ENCODE measurements at regions of chr3 and their contacts with region 1.

Region 1: GRCh38 chr3:57555738-57556458 is at the start of gene PDE12:
- DNase-seq: peak; percentile 82 to 85
- ATAC-seq: peak; percentile 96 to 98
- H3K4me3 ChIP-seq: peak within 1 kb of the TSS; percentile 75 to 94 (median 83)
- H3K27ac ChIP-seq: peak within 1 kb of the TSS; percentile 90 to 98 (median 94)
- H3K4me1 ChIP-seq: peaks cover 20 to 28% of the 10 kb centered on the region in 2 donors
- H3K27me3 ChIP-seq: no peaks in the 10 kb centered on the region
- CTCF ChIP-seq: no peak
- POLR2A ChIP-seq: peak; percentile 91 to 92
- total RNA-seq, gene PDE12: 16.5 to 25.7 (median 19.8) TPM

Region 2: GRCh38 chr3:57592290-57592689 is 36.4 kb after region 1 on chr3:
- in situ Hi-C with region 1: loop called in 2 of 4 experiments (anchors 5 kb)
- intact Hi-C with region 1: loop called (anchors 1 kb)
- DNase-seq: no peak
- ATAC-seq: no peak
- H3K4me3 ChIP-seq: no peak overlapping the region
- H3K27ac ChIP-seq: peak overlapping the region in 1 of 4 donors; percentile 39
- H3K4me1 ChIP-seq: peaks cover 41 to 48% of the 10 kb centered on the region in 2 donors
- H3K27me3 ChIP-seq: no peaks in the 10 kb centered on the region
- CTCF ChIP-seq: no peak
- POLR2A ChIP-seq: no peak

Measured in gastrocnemius medialis (tissue), 4 donors.